ENCODE measurements at regions of chr5 and their contacts with region 1.

Region 1: GRCh38 chr5:113294311-113295110 is 140.3 kb downstream of the TSSK1B start:
- DNase-seq: peak; percentile 96
- H3K4me3 ChIP-seq: peak overlapping the region; percentile 51 to 82 (median 72)
- H3K27ac ChIP-seq: peak overlapping the region; percentile 83 to 91 (median 88)
- H3K4me1 ChIP-seq: peaks cover 0 to 23% (median 8%) of the 10 kb centered on the region in 4 donors
- H3K27me3 ChIP-seq: no peaks in the 10 kb centered on the region
- CTCF ChIP-seq: no peak
- EP300 ChIP-seq: no peak
- POLR2A ChIP-seq: peak; percentile 60 to 75

Region 2: DNA sequence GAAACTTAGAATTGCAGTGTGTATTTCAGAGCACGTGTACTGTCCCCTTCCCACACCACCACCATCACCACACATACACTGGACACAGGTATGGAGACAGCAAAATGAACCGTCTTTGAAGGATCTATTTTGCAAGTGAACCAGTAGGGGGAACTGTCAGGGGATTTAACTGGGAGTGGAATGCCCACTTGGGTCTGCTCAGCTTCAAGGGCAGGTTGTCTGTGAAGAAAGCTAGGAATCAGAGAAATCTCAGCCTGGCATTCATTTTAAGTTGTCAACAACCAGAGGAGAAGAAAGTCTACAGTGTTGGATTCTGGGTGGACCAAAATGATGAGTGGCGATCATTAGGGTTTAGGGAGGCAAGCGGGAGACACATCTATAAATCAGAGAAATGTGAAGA is 170.9 kb before region 1 on chr5:
- intact Hi-C with region 1: loop called (anchors 10 kb)
- DNase-seq: no peak
- H3K4me3 ChIP-seq: no peak overlapping the region
- H3K27ac ChIP-seq: no peak overlapping the region
- H3K4me1 ChIP-seq: peaks cover 0 to 10% (median 6%) of the 10 kb centered on the region in 4 donors
- H3K27me3 ChIP-seq: no peaks in the 10 kb centered on the region
- CTCF ChIP-seq: no peak
- EP300 ChIP-seq: no peak
- POLR2A ChIP-seq: no peak

Region 3: GRCh38 chr5:113255579-113256386 is 38.7 kb before region 1 on chr5:
- intact Hi-C with region 1: loop called (anchors 5 kb)
- DNase-seq: no peak
- H3K4me3 ChIP-seq: no peak overlapping the region
- H3K27ac ChIP-seq: peak overlapping the region in 3 of 4 donors; percentile 14 to 42 (median 30)
- H3K4me1 ChIP-seq: no peaks in the 10 kb centered on the region
- H3K27me3 ChIP-seq: no peaks in the 10 kb centered on the region
- CTCF ChIP-seq: no peak
- EP300 ChIP-seq: no peak
- POLR2A ChIP-seq: no peak

Region 4: GRCh38 chr5:113487781-113488644 is 193.5 kb after region 1 on chr5 and contains the start of gene MCC:
- intact Hi-C with region 1: loop called (anchors 10 kb)
- DNase-seq: peak; percentile 88
- H3K4me3 ChIP-seq: peak within 1 kb of the TSS; percentile 48 to 71 (median 66)
- H3K27ac ChIP-seq: peak within 1 kb of the TSS in 3 of 4 donors; percentile 46 to 65 (median 50)
- H3K4me1 ChIP-seq: peaks cover 0 to 22% (median 10%) of the 10 kb centered on the region in 4 donors
- H3K27me3 ChIP-seq: no peaks in the 10 kb centered on the region
- CTCF ChIP-seq: no peak
- EP300 ChIP-seq: no peak
- POLR2A ChIP-seq: no peak
- total RNA-seq, gene MCC: 9.1 to 14.0 (median 12.2) TPM

Region 5: DNA sequence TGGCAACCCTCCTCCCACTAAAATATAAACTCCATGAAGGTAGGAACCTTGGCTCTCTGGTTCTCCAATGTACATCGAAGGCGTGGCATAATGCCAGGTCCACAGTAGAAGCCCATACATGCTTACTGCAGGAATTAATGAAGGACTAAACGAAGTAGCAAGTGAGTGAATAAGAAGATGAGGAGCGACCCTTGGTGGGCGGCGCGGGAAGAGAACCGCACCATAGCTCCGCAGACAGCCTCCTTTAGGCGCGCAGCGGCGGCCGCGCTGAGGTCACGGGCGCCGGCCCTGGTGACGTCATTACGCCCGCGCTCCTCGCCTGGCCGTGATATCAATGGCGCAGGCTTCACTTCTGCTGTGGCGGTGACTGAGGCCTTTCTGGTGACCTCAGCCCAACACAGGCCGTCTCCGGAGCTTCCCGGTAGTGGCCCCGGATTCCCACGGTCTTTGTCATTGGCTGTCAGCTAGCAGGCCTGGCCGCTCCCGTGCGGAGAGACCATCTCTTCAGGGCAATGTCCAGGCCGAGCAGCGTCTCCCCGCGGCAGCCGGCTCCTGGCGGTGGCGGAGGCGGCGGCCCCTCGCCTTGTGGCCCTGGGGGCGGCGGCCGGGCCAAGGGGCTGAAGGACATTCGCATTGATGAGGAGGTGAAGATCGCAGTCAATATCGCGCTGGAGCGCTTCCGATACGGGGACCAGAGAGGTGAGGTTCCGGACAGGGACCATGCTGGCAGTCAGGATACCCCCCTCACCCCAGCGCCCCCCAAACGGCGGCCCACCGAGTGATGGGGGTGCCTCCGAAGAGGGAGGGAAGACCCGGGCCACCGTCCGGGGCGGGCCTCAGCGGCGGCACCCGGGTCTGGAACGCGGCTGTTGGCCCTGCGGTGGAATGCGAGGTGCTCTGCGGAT is 219.1 kb after region 1 on chr5 and contains the start of gene YTHDC2:
- intact Hi-C with region 1: loop called (anchors 10 kb)
- DNase-seq: peak; percentile 92
- H3K4me3 ChIP-seq: peak within 1 kb of the TSS; percentile 74 to 90 (median 81)
- H3K27ac ChIP-seq: peak within 1 kb of the TSS; percentile 92 to 96 (median 94)
- H3K4me1 ChIP-seq: peaks cover 0 to 23% (median 18%) of the 10 kb centered on the region in 4 donors
- H3K27me3 ChIP-seq: no peaks in the 10 kb centered on the region
- CTCF ChIP-seq: peak in 1 of 4 experiments; percentile 4
- EP300 ChIP-seq: no peak
- POLR2A ChIP-seq: peak; percentile 38 to 44
- total RNA-seq, gene YTHDC2: 15.6 to 21.9 (median 21.7) TPM

Region 6: DNA sequence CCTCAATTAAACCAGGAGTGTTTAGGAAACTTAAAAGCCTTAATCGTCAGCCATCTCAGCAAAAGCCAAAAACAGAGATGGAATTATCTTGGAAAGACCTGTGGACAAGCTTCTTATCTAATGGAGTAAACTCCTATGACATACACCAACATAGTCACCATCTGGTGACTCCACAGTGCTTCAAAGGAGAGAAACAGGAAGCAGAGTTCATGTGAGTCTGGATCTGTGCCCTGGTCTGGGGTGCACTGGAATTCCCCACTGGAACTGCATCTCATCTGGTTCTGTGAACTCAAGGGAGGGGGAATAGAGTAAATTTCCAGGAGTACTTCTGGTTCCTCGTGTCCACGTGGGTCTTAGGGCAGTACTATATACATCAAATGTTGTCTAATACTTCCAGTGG is 1031.0 kb after region 1 on chr5:
- intact Hi-C with region 1: no loop called
- DNase-seq: no peak
- H3K4me3 ChIP-seq: no peak overlapping the region
- H3K27ac ChIP-seq: no peak overlapping the region
- H3K4me1 ChIP-seq: no peaks in the 10 kb centered on the region
- H3K27me3 ChIP-seq: no peaks in the 10 kb centered on the region
- CTCF ChIP-seq: no peak
- EP300 ChIP-seq: no peak
- POLR2A ChIP-seq: no peak

Measured in sigmoid colon (tissue), 7 donors.